ENCODE measurements at regions of chr1 and their contacts with region 1.

Region 1: GRCh38 chr1:168342572-168343280 is 62.0 kb downstream of the TBX19 start:
- DNase-seq: peak; percentile 79
- H3K4me3 Mint-ChIP-seq: no peak overlapping the region
- H3K27ac Mint-ChIP-seq: peak overlapping the region; percentile 14
- H3K4me1 Mint-ChIP-seq: peaks cover 64% of the 10 kb centered on the region
- H3K27me3 Mint-ChIP-seq: peaks cover 7% of the 10 kb centered on the region

Region 2: DNA sequence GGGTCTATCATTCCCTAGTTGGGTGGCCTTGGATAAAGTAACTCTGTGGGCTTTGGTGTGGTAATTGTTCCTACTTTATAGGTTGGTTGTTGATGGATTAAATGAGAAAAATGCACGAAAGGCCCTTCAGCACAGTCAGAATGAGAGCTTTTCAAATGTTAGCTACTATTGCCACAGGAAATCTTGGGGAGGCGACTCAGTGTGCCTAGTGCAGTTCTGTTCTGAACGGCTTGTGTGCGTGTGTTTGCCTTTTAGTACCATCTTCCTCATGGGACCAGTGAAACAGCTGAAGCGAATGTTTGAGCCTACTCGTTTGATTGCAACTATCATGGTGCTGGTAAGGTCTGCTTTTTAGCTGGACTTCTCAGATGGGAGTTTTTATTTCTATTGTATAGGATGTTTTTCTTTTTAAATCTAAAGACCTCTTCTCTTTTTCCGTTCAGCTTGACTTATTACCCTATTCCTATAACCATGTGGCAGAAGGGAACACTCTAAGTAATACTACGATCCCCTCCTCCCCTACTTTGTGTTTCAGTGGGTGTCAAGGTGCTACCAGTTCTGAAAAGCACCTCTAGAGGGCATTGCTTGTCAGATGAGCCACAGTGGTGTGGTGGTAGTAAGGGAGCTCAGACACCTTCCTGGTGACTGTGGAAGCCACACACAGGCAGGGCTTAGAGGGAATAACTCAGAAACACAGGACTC is 107.7 kb before region 1 on chr1:
- intact Hi-C with region 1: loop called (anchors 1 kb)
- DNase-seq: peak; percentile 39
- H3K4me3 Mint-ChIP-seq: peak overlapping the region; percentile 37
- H3K27ac Mint-ChIP-seq: peak overlapping the region; percentile 82
- H3K4me1 Mint-ChIP-seq: peaks cover 76% of the 10 kb centered on the region
- H3K27me3 Mint-ChIP-seq: no peaks in the 10 kb centered on the region

Region 3: GRCh38 chr1:168439456-168440375 is 97.0 kb after region 1 on chr1:
- intact Hi-C with region 1: loop called (anchors 1 kb)
- DNase-seq: peak; percentile 78
- H3K4me3 Mint-ChIP-seq: peak overlapping the region; percentile 57
- H3K27ac Mint-ChIP-seq: no peak overlapping the region
- H3K4me1 Mint-ChIP-seq: peaks cover 52% of the 10 kb centered on the region
- H3K27me3 Mint-ChIP-seq: no peaks in the 10 kb centered on the region

Region 4: GRCh38 chr1:168572633-168573032 is 229.9 kb after region 1 on chr1:
- intact Hi-C with region 1: loop called (anchors 1 kb)
- DNase-seq: no peak
- H3K4me3 Mint-ChIP-seq: no peak overlapping the region
- H3K27ac Mint-ChIP-seq: no peak overlapping the region
- H3K4me1 Mint-ChIP-seq: peaks cover 39% of the 10 kb centered on the region
- H3K27me3 Mint-ChIP-seq: peaks cover 9% of the 10 kb centered on the region

Region 5: GRCh38 chr1:169348383-169349036 is 1005.8 kb after region 1 on chr1:
- intact Hi-C with region 1: loop called (anchors 5 kb)
- DNase-seq: no peak
- H3K4me3 Mint-ChIP-seq: no peak overlapping the region
- H3K27ac Mint-ChIP-seq: no peak overlapping the region
- H3K4me1 Mint-ChIP-seq: peaks cover 17% of the 10 kb centered on the region
- H3K27me3 Mint-ChIP-seq: peaks cover 2% of the 10 kb centered on the region

Measured in activated T-helper 1 cell treated with anti-CD3 and anti-CD28 coated beads, Interleukin-12 subunit alpha, Interleukin-12 subunit beta, Interleukin-2, Interleukin-4 antibody, amounts not matched to agents 30 ng/mL and 10 ng/mL and 1 ng/mL, durations not matched to agents 14 hours and 24 hours and 36 hours (primary cell).